ENCODE measurements at regions of chr1 and their contacts with region 1.

Region 1: DNA sequence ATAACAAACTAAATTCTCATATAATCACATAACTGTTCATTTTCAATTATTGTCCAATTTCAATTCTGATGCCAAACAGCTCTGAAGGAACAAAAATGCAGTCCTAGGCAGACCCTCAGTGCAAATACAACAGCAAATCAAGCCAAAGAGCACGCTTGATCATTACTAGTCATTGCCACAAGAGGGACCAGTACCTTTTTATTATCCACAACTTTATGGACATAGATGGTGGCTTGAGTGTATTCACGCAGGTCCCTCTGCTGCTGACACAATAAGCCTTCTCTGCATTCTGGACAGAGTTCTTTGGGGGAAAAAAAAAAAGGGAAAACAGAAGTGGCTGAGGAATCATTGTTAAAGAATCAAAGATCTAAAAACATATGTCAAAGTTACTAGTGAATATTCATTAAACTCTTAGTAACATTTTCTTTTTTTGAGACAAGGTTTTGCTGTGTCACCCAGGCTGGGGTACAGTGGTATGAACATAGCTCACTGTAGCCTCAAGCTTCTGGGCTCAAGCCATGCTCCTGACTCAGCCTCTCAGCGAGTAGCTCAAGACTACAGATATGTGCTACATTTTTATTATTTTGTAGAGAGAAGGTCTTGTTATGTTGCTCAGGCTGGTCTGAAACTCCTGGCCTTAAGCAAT is 34.3 kb upstream of the RAP1GAP start:
- DNase-seq: no peak
- ATAC-seq: no peak
- H3K4me3 ChIP-seq: no peak overlapping the region
- H3K27ac ChIP-seq: no peak overlapping the region
- H3K4me1 ChIP-seq: peaks cover 0 to 15% (median 7%) of the 10 kb centered on the region in 12 donors
- H3K27me3 ChIP-seq: no peaks in the 10 kb centered on the region
- CTCF ChIP-seq: peak in 9 of 12 donors; percentile 15 to 39 (median 22)
- POLR2A ChIP-seq: no peak

Region 2: GRCh38 chr1:21631944-21632887 is 71.2 kb before region 1 on chr1:
- intact Hi-C with region 1: no loop called
- DNase-seq: no peak
- ATAC-seq: peak in 2 of 4 donors; percentile 16 to 48
- H3K4me3 ChIP-seq: no peak overlapping the region
- H3K27ac ChIP-seq: no peak overlapping the region
- H3K4me1 ChIP-seq: peaks cover 0 to 7% (median 0%) of the 10 kb centered on the region in 12 donors
- H3K27me3 ChIP-seq: peaks cover 0 to 19% (median 0%) of the 10 kb centered on the region in 9 donors
- CTCF ChIP-seq: no peak
- POLR2A ChIP-seq: no peak

Region 3: DNA sequence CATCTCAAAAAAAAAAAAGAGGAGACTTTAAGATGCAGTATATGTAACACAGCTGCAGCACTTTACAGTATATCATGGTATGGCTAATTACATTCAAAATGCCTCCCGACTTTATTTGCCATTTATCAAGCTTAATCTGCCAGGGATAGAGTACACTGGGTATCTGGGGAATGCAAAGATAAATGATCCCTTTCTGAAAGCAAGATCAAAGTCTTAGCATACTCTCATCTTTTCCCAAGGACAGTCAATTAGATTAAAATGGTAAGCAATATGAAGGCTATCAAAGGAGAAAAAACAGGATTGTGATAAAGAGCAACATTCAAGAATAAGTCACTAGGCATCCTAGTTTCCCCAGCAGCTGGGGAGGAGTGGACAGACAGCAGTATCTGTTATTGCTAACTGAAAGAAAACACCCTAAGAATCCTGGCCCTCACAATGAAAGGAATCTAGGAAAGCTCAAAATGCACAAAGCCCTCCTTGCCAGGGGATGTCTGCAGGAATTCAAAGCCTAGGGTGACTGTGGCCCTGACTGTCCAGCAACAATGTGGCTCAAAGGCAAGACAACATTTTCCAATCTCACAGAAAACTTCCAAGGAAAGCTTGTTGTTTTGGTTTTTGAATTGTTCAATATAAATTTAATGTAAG is 22.4 kb after region 1 on chr1:
- intact Hi-C with region 1: no loop called
- DNase-seq: no peak
- ATAC-seq: no peak
- H3K4me3 ChIP-seq: no peak overlapping the region
- H3K27ac ChIP-seq: no peak overlapping the region
- H3K4me1 ChIP-seq: no peaks in the 10 kb centered on the region
- H3K27me3 ChIP-seq: no peaks in the 10 kb centered on the region
- CTCF ChIP-seq: no peak
- POLR2A ChIP-seq: no peak

Region 4: DNA sequence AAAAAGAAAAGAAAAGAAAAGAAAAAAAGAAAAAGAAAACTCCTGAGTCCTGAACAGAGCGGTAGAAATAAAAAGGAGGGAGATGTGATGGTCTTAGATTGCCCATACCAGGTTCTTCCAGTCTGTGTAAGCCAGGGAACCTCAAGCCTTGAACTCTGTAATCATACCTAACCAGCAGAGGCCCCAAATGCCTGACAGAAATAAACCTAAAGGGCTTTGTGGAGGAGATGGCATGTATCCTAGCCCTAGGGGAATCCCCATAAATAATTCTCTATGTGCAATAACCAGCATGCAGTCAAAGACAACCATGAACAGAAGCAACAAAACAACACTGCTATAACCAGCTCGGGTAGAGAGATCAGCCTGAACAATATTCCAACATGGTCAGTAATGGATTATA is 39.1 kb after region 1 on chr1:
- intact Hi-C with region 1: loop called in 2 of 10 experiments (anchors 2 to 5 kb)
- DNase-seq: no peak
- ATAC-seq: peak in 3 of 4 donors; percentile 36 to 85 (median 67)
- H3K4me3 ChIP-seq: no peak overlapping the region
- H3K27ac ChIP-seq: no peak overlapping the region
- H3K4me1 ChIP-seq: peaks cover 0 to 4% (median 0%) of the 10 kb centered on the region in 12 donors
- H3K27me3 ChIP-seq: no peaks in the 10 kb centered on the region
- CTCF ChIP-seq: peak in 1 of 12 donors; percentile 17
- POLR2A ChIP-seq: no peak

Region 5: DNA sequence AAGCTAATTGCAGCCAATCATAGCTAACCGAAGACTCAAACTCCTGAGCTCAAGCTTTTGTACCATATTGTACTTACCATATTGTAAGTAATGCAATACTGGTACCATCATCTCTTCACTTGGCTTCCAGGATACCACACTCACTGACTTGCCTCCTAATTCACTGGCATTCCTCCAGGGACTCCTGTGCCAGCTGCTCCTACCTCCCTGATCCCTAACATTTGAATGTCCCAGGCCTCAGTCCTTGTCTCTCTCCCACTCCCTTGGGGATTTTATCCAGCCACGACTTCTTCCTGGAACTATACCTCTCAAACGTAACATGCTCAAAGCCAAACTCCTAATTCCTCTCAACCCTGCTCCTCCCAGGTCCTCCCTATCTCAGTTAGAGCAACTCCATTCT is 45.7 kb after region 1 on chr1:
- intact Hi-C with region 1: loop called in 1 of 10 experiments (anchors 5 kb)
- DNase-seq: peak in 1 of 5 donors; percentile 48
- ATAC-seq: peak in 2 of 4 donors; percentile 50 to 71
- H3K4me3 ChIP-seq: no peak overlapping the region
- H3K27ac ChIP-seq: no peak overlapping the region
- H3K4me1 ChIP-seq: peaks cover 0 to 15% (median 0%) of the 10 kb centered on the region in 12 donors
- H3K27me3 ChIP-seq: no peaks in the 10 kb centered on the region
- CTCF ChIP-seq: no peak
- POLR2A ChIP-seq: no peak